ENCODE measurements at regions of chr10 and their contacts with region 1.

Region 1: GRCh38 chr10:23314835-23315239 is 29.8 kb downstream of the C10orf67 start:
- DNase-seq: peak in 11 of 14 experiments; percentile 20 to 84 (median 42)
- ATAC-seq: peak; percentile 52
- H3K4me3 ChIP-seq: no peak overlapping the region
- H3K4me3 Mint-ChIP-seq: no peak overlapping the region
- H3K27ac ChIP-seq: no peak overlapping the region
- H3K27ac Mint-ChIP-seq: no peak overlapping the region
- H3K4me1 ChIP-seq: no peaks in the 10 kb centered on the region
- H3K4me1 Mint-ChIP-seq: no peaks in the 10 kb centered on the region
- H3K27me3 ChIP-seq: no peaks in the 10 kb centered on the region
- H3K27me3 Mint-ChIP-seq: no peaks in the 10 kb centered on the region
- CTCF ChIP-seq: peak; percentile 81

Region 2: DNA sequence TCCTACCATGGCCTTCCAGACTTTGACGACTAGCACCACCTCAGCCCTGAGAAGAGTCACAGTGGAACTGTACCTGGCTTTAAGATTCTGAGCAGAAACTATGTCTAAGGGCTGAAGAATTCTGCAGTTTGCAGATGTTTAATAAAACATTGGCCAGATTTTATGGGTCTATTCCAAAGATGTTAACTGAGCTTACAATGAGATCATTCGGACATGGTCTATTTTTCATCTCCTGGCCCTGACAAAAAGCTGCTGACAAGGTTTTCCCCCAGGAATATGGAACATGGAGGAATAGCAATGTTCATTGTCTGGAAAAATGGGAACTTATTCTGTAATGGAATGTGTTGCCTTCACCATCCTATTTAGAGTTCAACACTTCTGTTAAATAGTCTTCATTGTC is 56.3 kb before region 1 on chr10:
- CTCF ChIA-PET with region 1: no interaction called
- POLR2A ChIA-PET with region 1: no interaction called
- intact Hi-C with region 1: no loop called
- DNase-seq: no peak
- ATAC-seq: no peak
- H3K4me3 ChIP-seq: no peak overlapping the region
- H3K4me3 Mint-ChIP-seq: no peak overlapping the region
- H3K27ac ChIP-seq: no peak overlapping the region
- H3K27ac Mint-ChIP-seq: no peak overlapping the region
- H3K4me1 ChIP-seq: no peaks in the 10 kb centered on the region
- H3K4me1 Mint-ChIP-seq: no peaks in the 10 kb centered on the region
- H3K27me3 ChIP-seq: peaks cover 5 to 14% of the 10 kb centered on the region in 2 experiments
- H3K27me3 Mint-ChIP-seq: peaks cover 22% of the 10 kb centered on the region
- CTCF ChIP-seq: no peak

Region 3: DNA sequence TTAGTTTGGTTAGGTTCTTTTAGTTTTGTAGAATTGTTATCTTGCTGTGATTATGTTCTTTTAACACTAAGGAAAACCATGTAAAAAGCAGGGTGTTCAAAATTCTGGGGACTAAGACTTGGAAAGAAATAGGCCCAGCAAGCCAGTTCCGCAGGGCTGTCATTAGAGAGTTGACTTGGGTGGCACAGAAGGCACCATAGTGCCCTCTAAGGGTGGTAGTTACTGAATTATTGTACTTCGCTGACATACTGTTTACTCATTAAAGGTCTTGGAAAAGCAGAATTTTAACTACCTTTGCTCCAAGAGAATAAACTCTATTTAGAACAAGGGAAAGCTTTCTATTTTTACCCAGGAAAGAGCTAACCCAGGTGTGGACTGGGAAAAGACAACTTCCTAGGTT is 210.6 kb after region 1 on chr10:
- CTCF ChIA-PET with region 1: interaction called, 15 read pairs
- POLR2A ChIA-PET with region 1: no interaction called
- intact Hi-C with region 1: loop called (anchors 1 to 2 kb)
- DNase-seq: peak in 5 of 14 experiments; percentile 1 to 52 (median 28)
- ATAC-seq: no peak
- H3K4me3 ChIP-seq: no peak overlapping the region
- H3K4me3 Mint-ChIP-seq: no peak overlapping the region
- H3K27ac ChIP-seq: no peak overlapping the region
- H3K27ac Mint-ChIP-seq: no peak overlapping the region
- H3K4me1 ChIP-seq: no peaks in the 10 kb centered on the region
- H3K4me1 Mint-ChIP-seq: no peaks in the 10 kb centered on the region
- H3K27me3 ChIP-seq: peaks cover 0 to 4% of the 10 kb centered on the region in 2 experiments
- H3K27me3 Mint-ChIP-seq: peaks cover 2% of the 10 kb centered on the region
- CTCF ChIP-seq: peak; percentile 52

Region 4: DNA sequence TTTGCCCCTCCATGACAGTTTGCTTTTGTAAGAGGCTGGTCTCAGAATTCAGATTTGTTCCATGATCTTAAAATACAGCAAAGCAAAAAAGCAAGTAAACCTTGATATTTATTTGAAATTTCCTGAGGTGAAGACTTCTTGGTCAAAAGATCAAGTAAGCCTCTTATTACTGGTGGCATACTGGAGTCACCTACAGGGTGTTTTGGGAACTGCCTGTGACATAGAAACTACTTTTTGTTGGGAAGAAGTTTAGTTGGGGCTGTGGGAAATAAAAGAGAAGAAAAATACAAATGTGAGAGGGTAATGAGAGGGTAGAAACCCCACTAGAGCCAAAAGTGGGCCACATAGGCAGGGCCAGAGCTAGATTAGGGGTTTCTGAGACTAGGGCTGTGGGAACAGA is 341.9 kb after region 1 on chr10:
- CTCF ChIA-PET with region 1: interaction called, 3 read pairs
- POLR2A ChIA-PET with region 1: no interaction called
- intact Hi-C with region 1: loop called (anchors 2 to 5 kb)
- DNase-seq: peak in 3 of 14 experiments; percentile 8 to 32 (median 32)
- ATAC-seq: no peak
- H3K4me3 ChIP-seq: no peak overlapping the region
- H3K4me3 Mint-ChIP-seq: no peak overlapping the region
- H3K27ac ChIP-seq: no peak overlapping the region
- H3K27ac Mint-ChIP-seq: no peak overlapping the region
- H3K4me1 ChIP-seq: no peaks in the 10 kb centered on the region
- H3K4me1 Mint-ChIP-seq: no peaks in the 10 kb centered on the region
- H3K27me3 ChIP-seq: no peaks in the 10 kb centered on the region
- H3K27me3 Mint-ChIP-seq: peaks cover 17% of the 10 kb centered on the region
- CTCF ChIP-seq: peak; percentile 26

Region 5: GRCh38 chr10:23702977-23703414 is 388.2 kb after region 1 on chr10:
- CTCF ChIA-PET with region 1: interaction called, 5 read pairs
- POLR2A ChIA-PET with region 1: no interaction called
- intact Hi-C with region 1: loop called (anchors 1 kb)
- DNase-seq: peak; percentile 17 to 77 (median 38)
- ATAC-seq: peak; percentile 73
- H3K4me3 ChIP-seq: no peak overlapping the region
- H3K4me3 Mint-ChIP-seq: no peak overlapping the region
- H3K27ac ChIP-seq: no peak overlapping the region
- H3K27ac Mint-ChIP-seq: no peak overlapping the region
- H3K4me1 ChIP-seq: no peaks in the 10 kb centered on the region
- H3K4me1 Mint-ChIP-seq: no peaks in the 10 kb centered on the region
- H3K27me3 ChIP-seq: peaks cover 0 to 7% of the 10 kb centered on the region in 2 experiments
- H3K27me3 Mint-ChIP-seq: peaks cover 43% of the 10 kb centered on the region
- CTCF ChIP-seq: peak; percentile 71

Region 6: GRCh38 chr10:24201503-24202180 is 886.8 kb after region 1 on chr10:
- CTCF ChIA-PET with region 1: interaction called, 5 read pairs
- POLR2A ChIA-PET with region 1: no interaction called
- intact Hi-C with region 1: loop called in 1 of 2 experiments (anchors 1 kb)
- DNase-seq: no peak
- ATAC-seq: no peak
- H3K4me3 ChIP-seq: no peak overlapping the region
- H3K4me3 Mint-ChIP-seq: no peak overlapping the region
- H3K27ac ChIP-seq: no peak overlapping the region
- H3K27ac Mint-ChIP-seq: no peak overlapping the region
- H3K4me1 ChIP-seq: no peaks in the 10 kb centered on the region
- H3K4me1 Mint-ChIP-seq: no peaks in the 10 kb centered on the region
- H3K27me3 ChIP-seq: peaks cover 0 to 3% of the 10 kb centered on the region in 2 experiments
- H3K27me3 Mint-ChIP-seq: peaks cover 24% of the 10 kb centered on the region
- CTCF ChIP-seq: no peak

Region 7: GRCh38 chr10:24556750-24557742 is 1242.2 kb after region 1 on chr10:
- CTCF ChIA-PET with region 1: no interaction called
- POLR2A ChIA-PET with region 1: no interaction called
- intact Hi-C with region 1: loop called in 1 of 2 experiments (anchors 2 kb)
- DNase-seq: peak in 3 of 14 experiments; percentile 40 to 65 (median 51)
- ATAC-seq: peak; percentile 64
- H3K4me3 ChIP-seq: no peak overlapping the region
- H3K4me3 Mint-ChIP-seq: no peak overlapping the region
- H3K27ac ChIP-seq: no peak overlapping the region
- H3K27ac Mint-ChIP-seq: no peak overlapping the region
- H3K4me1 ChIP-seq: peaks cover 4% of the 10 kb centered on the region
- H3K4me1 Mint-ChIP-seq: peaks cover 3% of the 10 kb centered on the region
- H3K27me3 ChIP-seq: no peaks in the 10 kb centered on the region
- H3K27me3 Mint-ChIP-seq: no peaks in the 10 kb centered on the region
- CTCF ChIP-seq: peak; percentile 60

Measured in CD4-positive, alpha-beta T cell (primary cell).